Adrenal gland (tissue), 19 donors: ENCODE measurements at regions of chr9 and their contacts with region 1.

Region 1: GRCh38 chr9:121498150-121498486 is 1.5 kb downstream of the GGTA1 start:
- DNase-seq: peak; percentile 69 to 87 (median 74)
- H3K4me3 ChIP-seq: peak overlapping the region in 2 of 4 donors; percentile 53 to 56
- H3K27ac ChIP-seq: peak overlapping the region in 1 of 5 donors; percentile 26
- H3K4me1 ChIP-seq: peaks cover 19 to 25% of the 10 kb centered on the region in 2 donors
- H3K27me3 ChIP-seq: no peaks in the 10 kb centered on the region
- CTCF ChIP-seq: peak; percentile 59 to 63 (median 60)
- POLR2A ChIP-seq: no peak

Region 2: GRCh38 chr9:121463026-121463807 is 34.9 kb before region 1 on chr9:
- intact Hi-C with region 1: loop called in 1 of 2 experiments (anchors 5 kb)
- DNase-seq: peak; percentile 46 to 79 (median 58)
- H3K4me3 ChIP-seq: no peak overlapping the region
- H3K27ac ChIP-seq: no peak overlapping the region
- H3K4me1 ChIP-seq: no peaks in the 10 kb centered on the region
- H3K27me3 ChIP-seq: no peaks in the 10 kb centered on the region
- CTCF ChIP-seq: peak; percentile 47 to 69 (median 60)
- POLR2A ChIP-seq: no peak